ENCODE measurements at regions of chr9 and their contacts with region 1.

Region 1: DNA sequence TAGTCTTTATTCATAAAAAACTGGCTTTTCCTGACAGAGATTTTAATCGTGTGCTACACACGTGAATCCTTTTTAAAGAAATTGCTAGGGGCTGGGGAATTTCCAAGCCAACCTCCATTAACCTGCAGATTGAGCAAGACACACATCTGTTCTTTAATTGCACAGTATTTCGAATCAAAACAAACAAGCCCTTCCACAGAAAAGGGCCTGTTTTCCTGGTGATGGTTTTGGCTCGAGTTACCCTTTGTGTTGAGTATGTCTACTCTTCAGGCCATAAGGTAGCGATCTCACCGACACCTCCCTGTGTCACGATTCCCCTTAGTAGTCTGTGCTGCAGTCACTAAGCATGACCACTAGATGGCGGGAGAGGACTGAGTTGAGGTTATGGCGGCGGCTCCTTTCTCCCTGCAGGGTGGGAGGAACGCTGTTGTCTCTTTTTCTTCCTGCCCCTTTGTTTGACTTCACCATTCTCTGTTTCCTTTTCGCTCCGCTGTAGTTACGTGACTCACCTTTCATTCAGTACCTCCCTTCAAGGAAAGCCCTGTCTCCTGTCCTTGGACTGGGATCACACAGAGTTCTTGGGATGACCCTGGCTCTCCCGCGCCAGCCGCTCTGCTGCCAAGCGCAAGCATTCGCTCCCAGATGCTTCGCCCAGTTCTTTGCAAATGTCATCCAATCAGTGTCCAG is 137.1 kb upstream of the SLC24A2 start:
- DNase-seq: peak; percentile 79
- H3K4me3 Mint-ChIP-seq: peak overlapping the region; percentile 65
- H3K27ac Mint-ChIP-seq: peak overlapping the region; percentile 2
- H3K4me1 Mint-ChIP-seq: peaks cover 28% of the 10 kb centered on the region
- H3K27me3 Mint-ChIP-seq: peaks cover 2% of the 10 kb centered on the region

Region 2: DNA sequence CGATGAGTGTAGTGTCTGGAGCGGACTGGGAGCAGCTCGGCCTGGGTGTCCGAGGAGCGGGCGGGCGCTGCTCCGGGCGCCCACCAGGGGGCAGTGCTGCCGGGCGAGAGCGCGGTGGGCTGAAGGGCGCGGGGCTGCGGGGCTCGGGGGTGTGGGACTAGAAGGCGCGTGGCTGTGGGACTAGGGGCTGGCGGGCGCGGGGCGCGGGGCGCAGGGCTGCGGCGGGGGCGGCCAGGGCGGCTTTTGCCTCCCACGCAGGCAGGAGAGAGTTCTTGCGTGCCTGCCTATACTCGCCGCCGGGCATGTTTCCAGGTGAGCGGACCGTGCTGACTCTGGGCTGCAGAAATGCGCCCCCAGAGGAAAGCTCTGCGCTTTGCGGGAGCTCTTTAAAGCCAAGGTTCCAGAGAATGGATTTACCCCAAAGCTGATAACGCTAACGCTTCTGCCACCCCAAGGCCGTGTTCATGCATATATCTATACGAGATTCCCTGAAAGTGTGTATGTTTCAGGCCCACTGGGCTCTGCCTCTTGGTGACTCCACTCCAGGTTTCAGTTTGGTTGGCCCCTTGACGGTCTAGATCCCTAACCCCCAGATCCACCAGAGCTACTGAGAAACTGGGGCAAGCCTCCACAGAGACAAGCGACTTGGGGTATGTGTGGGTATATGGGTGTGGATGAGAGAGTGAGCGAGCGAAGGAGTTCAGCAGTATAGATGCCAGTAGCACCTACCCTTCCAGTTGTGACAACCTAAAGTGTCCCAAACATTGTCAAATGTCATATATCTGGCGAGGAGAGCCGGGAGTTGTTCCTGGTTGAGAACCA is 461.0 kb before region 1 on chr9:
- intact Hi-C with region 1: loop called (anchors 1 kb)
- DNase-seq: peak; percentile 64
- H3K4me3 Mint-ChIP-seq: peak overlapping the region; percentile 85
- H3K27ac Mint-ChIP-seq: no peak overlapping the region
- H3K4me1 Mint-ChIP-seq: peaks cover 18% of the 10 kb centered on the region
- H3K27me3 Mint-ChIP-seq: peaks cover 8% of the 10 kb centered on the region

Measured in activated T-helper 1 cell treated with anti-CD3 and anti-CD28 coated beads, Interleukin-12 subunit alpha, Interleukin-12 subunit beta, Interleukin-2, Interleukin-4 antibody, amounts not matched to agents 30 ng/mL and 10 ng/mL and 1 ng/mL, durations not matched to agents 14 hours and 24 hours and 36 hours (primary cell).